HepG2 (cell line): ENCODE measurements at regions of chr15 and their contacts with region 1.

Region 1: GRCh38 chr15:44066316-44066740 is 128.7 kb downstream of the FRMD5 start:
- DNase-seq: peak; percentile 71
- ATAC-seq: peak; percentile 51
- H3K4me3 ChIP-seq: no peak overlapping the region
- H3K27ac ChIP-seq: no peak overlapping the region
- H3K4me1 ChIP-seq: no peaks in the 10 kb centered on the region
- H3K27me3 ChIP-seq: no peaks in the 10 kb centered on the region
- CTCF ChIP-seq: peak; percentile 77
- EP300 ChIP-seq: no peak
- POLR2A ChIP-seq: no peak
- RAD21 ChIP-seq: 0 out of 2 replicates have a peak, but pooled peaks have one; percentile 35

Region 2: GRCh38 chr15:43872416-43873020 is 193.8 kb before region 1 on chr15:
- CTCF ChIA-PET with region 1: interaction called, 10 read pairs
- POLR2A ChIA-PET with region 1: no interaction called
- in situ Hi-C with region 1: no loop called
- intact Hi-C with region 1: no loop called
- DNase-seq: peak; percentile 57
- ATAC-seq: peak; percentile 90
- H3K4me3 ChIP-seq: no peak overlapping the region
- H3K27ac ChIP-seq: no peak overlapping the region
- H3K4me1 ChIP-seq: no peaks in the 10 kb centered on the region
- H3K27me3 ChIP-seq: no peaks in the 10 kb centered on the region
- CTCF ChIP-seq: peak; percentile 74
- EP300 ChIP-seq: no peak
- POLR2A ChIP-seq: no peak
- RAD21 ChIP-seq: no peak

Region 3: DNA sequence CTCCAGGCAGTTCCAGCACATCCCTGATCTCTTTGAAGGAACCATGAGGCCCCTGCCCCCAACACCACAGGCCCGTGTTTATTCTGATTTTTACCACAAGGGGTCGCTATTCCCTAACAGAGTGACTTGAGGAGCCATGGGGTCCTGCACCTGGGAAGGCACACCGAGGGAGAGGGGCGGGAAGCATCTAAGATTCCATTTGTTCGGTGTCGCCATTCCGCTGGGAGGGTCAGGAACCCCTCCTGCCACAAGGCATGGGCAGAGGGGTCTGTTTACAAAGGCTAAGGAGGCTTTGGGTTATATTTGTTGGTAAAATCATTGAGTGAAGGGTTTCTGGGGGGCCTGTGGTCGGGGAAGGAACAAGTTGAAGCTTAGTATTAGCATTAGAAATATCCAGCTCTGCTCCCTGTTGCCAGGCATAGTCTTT is 162.5 kb before region 1 on chr15:
- CTCF ChIA-PET with region 1: interaction called, 27 read pairs
- POLR2A ChIA-PET with region 1: no interaction called
- in situ Hi-C with region 1: loop called (anchors 5 kb)
- intact Hi-C with region 1: loop called (anchors 1 kb)
- DNase-seq: peak; percentile 66
- ATAC-seq: peak; percentile 91
- H3K4me3 ChIP-seq: no peak overlapping the region
- H3K27ac ChIP-seq: no peak overlapping the region
- H3K4me1 ChIP-seq: peaks cover 23% of the 10 kb centered on the region
- H3K27me3 ChIP-seq: no peaks in the 10 kb centered on the region
- CTCF ChIP-seq: peak; percentile 91
- EP300 ChIP-seq: no peak
- POLR2A ChIP-seq: no peak
- RAD21 ChIP-seq: peak; percentile 80

Region 4: DNA sequence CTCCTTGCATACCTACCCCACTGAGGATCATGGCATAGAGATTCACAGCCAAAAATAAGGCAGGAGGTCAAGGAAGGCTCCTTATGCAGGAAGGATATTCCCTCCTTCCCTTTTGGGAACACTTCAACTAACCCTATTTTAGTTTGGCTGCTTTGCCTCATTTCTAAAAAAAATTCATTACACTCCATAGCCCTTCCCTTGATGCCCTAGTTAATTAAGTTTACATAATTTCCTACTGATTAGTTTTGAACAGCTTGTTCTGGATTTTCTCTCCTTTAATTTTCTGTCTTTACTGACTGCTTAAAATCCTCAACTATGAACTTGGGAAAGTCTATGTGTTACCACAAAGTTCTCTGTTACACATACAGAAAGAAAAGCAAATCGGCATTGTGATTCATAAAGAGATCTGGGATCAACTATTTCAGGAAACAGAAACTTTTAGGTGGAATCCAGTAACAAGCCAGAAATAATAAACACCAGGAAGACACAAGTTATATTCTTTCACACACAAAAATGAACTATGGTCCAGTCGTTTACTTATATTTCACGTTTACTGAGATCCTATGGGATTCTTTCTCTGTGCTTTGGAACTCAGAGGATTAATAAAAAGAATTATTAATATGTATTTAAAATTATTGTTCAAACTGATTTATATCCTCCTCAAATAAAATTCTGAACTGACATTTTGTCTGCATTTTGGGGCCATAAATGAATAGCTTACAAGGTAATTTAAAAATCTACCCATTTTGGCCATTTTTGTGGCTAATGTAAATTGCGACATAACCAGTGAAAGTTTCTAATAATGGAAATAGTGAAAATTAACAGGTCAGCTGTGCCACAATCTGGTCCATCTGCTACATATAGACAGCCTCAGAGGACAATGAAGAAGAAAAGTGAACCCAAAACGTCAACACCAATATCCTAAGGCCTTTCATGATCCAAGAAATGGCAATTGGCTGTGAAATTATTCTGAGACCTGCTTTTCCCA is 15.0 kb after region 1 on chr15:
- CTCF ChIA-PET with region 1: no interaction called
- POLR2A ChIA-PET with region 1: no interaction called
- in situ Hi-C with region 1: no loop called
- intact Hi-C with region 1: no loop called
- DNase-seq: no peak
- ATAC-seq: no peak
- H3K4me3 ChIP-seq: no peak overlapping the region
- H3K27ac ChIP-seq: no peak overlapping the region
- H3K4me1 ChIP-seq: no peaks in the 10 kb centered on the region
- H3K27me3 ChIP-seq: no peaks in the 10 kb centered on the region
- CTCF ChIP-seq: no peak
- EP300 ChIP-seq: no peak
- POLR2A ChIP-seq: no peak
- RAD21 ChIP-seq: no peak